ENCODE measurements at regions of chr2 and their contacts with region 1.

Region 1: DNA sequence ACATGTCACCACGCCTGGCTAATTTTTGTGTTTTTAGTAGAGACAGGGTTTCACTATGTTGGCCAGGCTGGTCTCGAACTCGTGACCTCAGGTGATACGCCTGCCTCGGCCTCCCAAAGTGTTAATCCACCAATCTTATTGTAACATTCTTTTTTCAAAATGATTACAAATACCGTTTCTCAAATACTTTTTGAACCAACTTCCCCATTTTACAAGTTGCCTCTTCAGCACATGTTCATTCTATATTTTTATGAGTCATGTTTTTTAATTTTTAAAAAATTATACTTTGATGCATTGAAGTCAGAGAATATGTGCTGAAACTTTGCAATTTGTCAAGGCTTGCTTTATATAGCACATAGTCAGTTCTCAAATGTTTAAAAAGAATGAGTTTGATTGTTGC is 58.2 kb downstream of the QPCT start:
- DNase-seq: no peak
- H3K4me3 ChIP-seq: no peak overlapping the region
- H3K27ac ChIP-seq: no peak overlapping the region
- H3K4me1 ChIP-seq: no peaks in the 10 kb centered on the region
- H3K27me3 ChIP-seq: no peaks in the 10 kb centered on the region
- CTCF ChIP-seq: no peak
- EP300 ChIP-seq: no peak
- POLR2A ChIP-seq: no peak
- RAD21 ChIP-seq: no peak

Region 2: DNA sequence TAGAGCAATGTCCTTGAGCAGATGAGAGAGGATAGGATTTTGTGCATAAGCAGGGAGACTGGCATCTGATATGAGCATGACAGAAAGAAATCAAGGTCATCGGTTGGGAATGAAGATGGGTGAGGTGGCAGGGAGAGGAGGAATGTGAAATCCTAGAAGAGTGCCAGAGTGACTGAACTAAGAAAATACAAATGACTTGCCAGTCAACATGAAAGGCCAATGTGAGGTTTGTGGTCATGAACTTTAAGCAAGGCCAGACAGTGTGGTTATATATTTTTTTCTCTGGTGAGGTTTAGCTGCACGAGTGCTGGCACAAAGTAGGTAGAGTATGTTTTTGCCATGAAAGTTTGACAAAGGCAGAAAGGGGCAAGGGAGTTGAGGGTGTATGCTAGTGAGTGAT is 37.0 kb before region 1 on chr2:
- CTCF ChIA-PET with region 1: no interaction called
- POLR2A ChIA-PET with region 1: no interaction called
- DNase-seq: peak in 1 of 2 experiments; percentile 8
- H3K4me3 ChIP-seq: no peak overlapping the region
- H3K27ac ChIP-seq: no peak overlapping the region
- H3K4me1 ChIP-seq: no peaks in the 10 kb centered on the region
- H3K27me3 ChIP-seq: no peaks in the 10 kb centered on the region
- CTCF ChIP-seq: no peak
- EP300 ChIP-seq: no peak
- POLR2A ChIP-seq: no peak
- RAD21 ChIP-seq: no peak

Region 3: GRCh38 chr2:37459095-37459981 is 56.7 kb after region 1 on chr2:
- CTCF ChIA-PET with region 1: no interaction called
- POLR2A ChIA-PET with region 1: no interaction called
- DNase-seq: no peak
- H3K4me3 ChIP-seq: no peak overlapping the region
- H3K27ac ChIP-seq: no peak overlapping the region
- H3K4me1 ChIP-seq: no peaks in the 10 kb centered on the region
- H3K27me3 ChIP-seq: no peaks in the 10 kb centered on the region
- CTCF ChIP-seq: no peak
- EP300 ChIP-seq: no peak
- POLR2A ChIP-seq: no peak
- RAD21 ChIP-seq: no peak

Region 4: DNA sequence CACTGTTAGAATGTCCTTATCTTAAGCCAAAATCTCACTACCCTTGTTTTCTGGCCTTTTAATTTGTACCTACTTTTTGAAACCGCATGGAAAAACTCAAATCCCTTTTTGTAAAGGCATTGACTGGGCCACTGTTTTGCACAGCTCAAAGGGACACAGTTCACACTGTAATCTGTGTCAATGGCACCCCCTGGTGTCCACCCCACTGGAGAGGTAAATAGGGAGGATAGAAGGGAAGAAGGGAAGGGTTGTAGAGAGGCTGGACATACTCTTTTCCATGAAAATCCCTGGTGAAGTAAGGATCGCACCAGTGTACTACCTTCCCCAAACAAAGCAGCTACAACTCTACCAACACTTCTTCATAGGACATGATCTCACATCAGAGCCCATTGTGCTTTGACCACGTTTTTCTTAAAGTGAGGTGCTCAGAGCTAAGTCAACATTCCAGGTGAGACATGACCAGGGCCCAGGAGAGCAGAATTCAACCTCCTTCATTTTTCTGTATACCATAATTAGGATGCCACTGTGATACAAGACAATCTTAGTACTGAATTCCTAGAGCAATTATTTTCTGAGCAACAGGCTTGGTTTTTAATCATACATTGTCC is 430.1 kb after region 1 on chr2:
- CTCF ChIA-PET with region 1: interaction called, 31 read pairs
- POLR2A ChIA-PET with region 1: no interaction called
- DNase-seq: peak; percentile 41 to 85
- H3K4me3 ChIP-seq: no peak overlapping the region
- H3K27ac ChIP-seq: no peak overlapping the region
- H3K4me1 ChIP-seq: no peaks in the 10 kb centered on the region
- H3K27me3 ChIP-seq: no peaks in the 10 kb centered on the region
- CTCF ChIP-seq: peak; percentile 61 to 78 (median 73)
- EP300 ChIP-seq: no peak
- POLR2A ChIP-seq: no peak
- RAD21 ChIP-seq: peak; percentile 93 to 95